ENCODE measurements at regions of chr19 and their contacts with region 1.

Region 1: GRCh38 chr19:48006762-48007161 is 12.3 kb downstream of the ELSPBP1 start:
- DNase-seq: peak in 1 of 2 experiments; percentile 25
- H3K4me3 ChIP-seq: no peak overlapping the region
- H3K4me1 ChIP-seq: no peaks in the 10 kb centered on the region
- H3K27me3 ChIP-seq: no peaks in the 10 kb centered on the region

Region 2: DNA sequence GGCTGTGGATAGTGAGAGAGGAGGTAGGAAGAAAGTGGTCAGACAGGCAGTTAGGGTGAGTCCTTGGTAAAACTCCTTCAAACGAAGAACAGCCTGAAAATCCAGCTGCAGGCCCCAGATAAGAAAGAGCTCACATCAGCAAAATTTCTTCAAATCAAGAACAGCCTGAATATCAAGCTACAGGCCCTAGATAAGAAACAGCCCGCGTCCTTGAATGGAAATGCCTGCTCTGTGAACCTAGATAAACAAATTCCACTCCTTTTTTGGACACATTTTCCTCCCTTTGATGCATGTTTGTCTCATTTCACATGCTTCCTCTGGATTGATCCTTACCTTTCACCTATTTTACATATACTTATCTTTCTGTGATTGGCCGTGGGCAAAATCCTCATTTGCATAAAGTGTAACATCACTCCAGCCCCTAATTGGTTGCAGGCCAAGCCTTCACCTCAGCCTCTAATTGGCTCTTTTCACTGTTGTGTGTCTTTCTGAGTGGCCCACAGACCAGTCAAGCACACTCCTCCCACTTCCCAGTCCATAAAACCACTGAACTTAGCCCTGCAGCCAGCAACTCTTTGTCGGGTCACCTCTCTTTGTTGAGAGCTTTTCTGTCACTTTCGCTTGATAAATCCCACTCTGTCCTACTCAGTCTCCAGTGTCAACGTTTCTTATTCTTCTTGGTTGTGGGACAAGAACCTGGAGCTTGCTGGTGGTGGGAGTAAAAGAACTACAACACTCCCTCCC is 114.7 kb before region 1 on chr19:
- in situ Hi-C with region 1: loop called (anchors 25 kb)
- DNase-seq: no peak
- H3K4me3 ChIP-seq: no peak overlapping the region
- H3K4me1 ChIP-seq: no peaks in the 10 kb centered on the region
- H3K27me3 ChIP-seq: no peaks in the 10 kb centered on the region

Region 3: GRCh38 chr19:48053856-48054255 is 47.1 kb after region 1 on chr19:
- in situ Hi-C with region 1: no loop called
- DNase-seq: no peak
- H3K4me3 ChIP-seq: no peak overlapping the region
- H3K4me1 ChIP-seq: no peaks in the 10 kb centered on the region
- H3K27me3 ChIP-seq: no peaks in the 10 kb centered on the region

Region 4: GRCh38 chr19:48190288-48190884 is 183.6 kb after region 1 on chr19:
- in situ Hi-C with region 1: no loop called
- DNase-seq: no peak
- H3K4me3 ChIP-seq: no peak overlapping the region
- H3K4me1 ChIP-seq: no peaks in the 10 kb centered on the region
- H3K27me3 ChIP-seq: no peaks in the 10 kb centered on the region

Region 5: GRCh38 chr19:48290401-48290770 is 283.6 kb after region 1 on chr19:
- in situ Hi-C with region 1: no loop called
- DNase-seq: peak in 1 of 2 experiments; percentile 56
- H3K4me3 ChIP-seq: peak overlapping the region; percentile 45
- H3K4me1 ChIP-seq: no peaks in the 10 kb centered on the region
- H3K27me3 ChIP-seq: no peaks in the 10 kb centered on the region

Measured in HAP-1 (cell line).